ENCODE measurements at regions of chr2 and their contacts with region 1.

Region 1: GRCh38 chr2:240143801-240144648 is 3.6 kb upstream of the OTOS start:
- DNase-seq: peak; percentile 78 to 92
- ATAC-seq: peak; percentile 83
- H3K4me3 ChIP-seq: no peak overlapping the region
- H3K27ac ChIP-seq: no peak overlapping the region
- H3K4me1 ChIP-seq: no peaks in the 10 kb centered on the region
- H3K27me3 ChIP-seq: no peaks in the 10 kb centered on the region

Region 2: GRCh38 chr2:240060977-240061591 is 82.9 kb before region 1 on chr2:
- intact Hi-C with region 1: loop called (anchors 2 kb)
- DNase-seq: no peak
- ATAC-seq: no peak
- H3K4me3 ChIP-seq: no peak overlapping the region
- H3K27ac ChIP-seq: no peak overlapping the region
- H3K4me1 ChIP-seq: no peaks in the 10 kb centered on the region
- H3K27me3 ChIP-seq: no peaks in the 10 kb centered on the region

Region 3: GRCh38 chr2:240259201-240259923 is 115.3 kb after region 1 on chr2:
- intact Hi-C with region 1: no loop called
- DNase-seq: peak; percentile 91 to 93
- ATAC-seq: peak; percentile 89
- H3K4me3 ChIP-seq: no peak overlapping the region
- H3K27ac ChIP-seq: peak overlapping the region; percentile 85 to 99
- H3K4me1 ChIP-seq: no peaks in the 10 kb centered on the region
- H3K27me3 ChIP-seq: no peaks in the 10 kb centered on the region

Measured in aorta (tissue), 5 donors.